ENCODE measurements at regions of chr11 and their contacts with region 1.

Region 1: DNA sequence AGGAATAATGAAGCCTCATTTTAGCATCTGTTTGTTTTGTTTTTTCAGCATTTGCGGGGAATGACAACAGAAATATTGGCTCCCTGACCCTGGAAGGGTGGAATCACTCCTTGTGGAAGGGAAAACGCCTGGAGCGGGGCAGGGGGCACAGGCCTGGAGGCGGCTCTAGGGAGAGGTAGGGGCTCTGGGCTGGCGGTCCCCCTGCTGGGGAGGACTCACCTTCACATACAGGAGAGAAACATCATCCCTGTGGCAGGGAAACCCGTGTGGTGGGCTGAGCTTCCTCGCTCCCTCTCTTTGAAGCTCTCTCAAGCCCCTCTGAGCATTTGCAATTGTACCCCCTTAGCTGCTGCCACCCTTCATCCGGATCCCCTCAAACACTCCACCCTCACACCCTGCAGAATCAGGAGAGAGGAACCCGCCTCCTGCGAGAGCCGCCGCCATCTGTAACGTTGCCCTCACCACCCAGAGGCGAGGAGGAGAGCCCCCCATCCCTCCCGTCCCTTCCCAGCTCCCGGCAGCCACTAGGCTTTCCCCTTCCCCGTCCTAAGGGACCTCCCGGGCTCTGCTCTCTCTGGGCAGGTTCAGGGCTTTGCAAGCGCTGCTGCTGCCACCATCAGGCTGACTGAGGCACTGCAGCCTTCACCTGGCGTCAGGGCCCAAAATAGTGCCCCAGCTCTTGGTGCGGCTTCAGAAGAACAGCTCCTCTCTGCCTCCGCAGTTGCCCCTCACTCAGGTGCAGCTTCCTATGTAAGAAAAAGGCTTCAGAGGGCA is 10.4 kb downstream of the KIRREL3 start:
- DNase-seq: peak; percentile 26
- H3K4me3 Mint-ChIP-seq: no peak overlapping the region
- H3K27ac Mint-ChIP-seq: no peak overlapping the region
- H3K4me1 Mint-ChIP-seq: no peaks in the 10 kb centered on the region
- H3K27me3 Mint-ChIP-seq: peaks cover 12% of the 10 kb centered on the region

Region 2: DNA sequence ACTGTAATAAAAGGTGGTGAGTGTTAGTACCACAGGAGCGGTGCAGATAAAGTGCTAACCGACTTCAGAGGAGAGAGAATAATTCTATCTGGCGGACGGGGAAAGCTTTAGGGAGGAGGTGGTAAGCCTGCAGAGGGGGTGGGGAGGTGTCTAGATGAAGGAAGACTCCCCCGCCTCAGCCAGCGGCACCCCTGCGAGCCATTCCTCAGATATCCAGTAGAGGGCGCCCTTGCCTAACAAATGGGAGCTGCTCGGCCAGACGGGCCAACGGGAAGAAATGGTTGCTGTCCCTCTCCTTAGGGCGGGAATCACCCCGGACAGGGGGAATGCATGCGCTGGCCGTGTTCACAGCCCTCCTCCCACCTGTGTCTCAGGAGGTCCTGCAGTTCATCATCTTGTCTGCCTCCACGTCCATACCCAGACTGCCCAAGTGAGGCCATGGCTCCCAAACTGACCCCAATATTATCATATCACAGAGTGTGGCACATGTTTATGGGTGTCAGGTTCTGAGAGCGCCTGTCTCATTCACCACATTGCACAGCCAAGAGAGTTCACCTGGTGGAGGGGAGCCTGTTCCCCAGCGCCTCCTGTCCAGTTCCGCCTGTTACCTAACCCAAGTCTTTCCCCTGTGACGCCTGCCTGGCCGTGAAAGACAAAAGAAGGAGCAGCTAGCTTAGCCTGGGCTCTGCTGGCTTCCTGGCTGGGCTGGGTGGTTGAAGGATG is 549.2 kb before region 1 on chr11:
- intact Hi-C with region 1: loop called (anchors 2 kb)
- DNase-seq: peak; percentile 66
- H3K4me3 Mint-ChIP-seq: no peak overlapping the region
- H3K27ac Mint-ChIP-seq: no peak overlapping the region
- H3K4me1 Mint-ChIP-seq: peaks cover 6% of the 10 kb centered on the region
- H3K27me3 Mint-ChIP-seq: peaks cover 4% of the 10 kb centered on the region

Region 3: DNA sequence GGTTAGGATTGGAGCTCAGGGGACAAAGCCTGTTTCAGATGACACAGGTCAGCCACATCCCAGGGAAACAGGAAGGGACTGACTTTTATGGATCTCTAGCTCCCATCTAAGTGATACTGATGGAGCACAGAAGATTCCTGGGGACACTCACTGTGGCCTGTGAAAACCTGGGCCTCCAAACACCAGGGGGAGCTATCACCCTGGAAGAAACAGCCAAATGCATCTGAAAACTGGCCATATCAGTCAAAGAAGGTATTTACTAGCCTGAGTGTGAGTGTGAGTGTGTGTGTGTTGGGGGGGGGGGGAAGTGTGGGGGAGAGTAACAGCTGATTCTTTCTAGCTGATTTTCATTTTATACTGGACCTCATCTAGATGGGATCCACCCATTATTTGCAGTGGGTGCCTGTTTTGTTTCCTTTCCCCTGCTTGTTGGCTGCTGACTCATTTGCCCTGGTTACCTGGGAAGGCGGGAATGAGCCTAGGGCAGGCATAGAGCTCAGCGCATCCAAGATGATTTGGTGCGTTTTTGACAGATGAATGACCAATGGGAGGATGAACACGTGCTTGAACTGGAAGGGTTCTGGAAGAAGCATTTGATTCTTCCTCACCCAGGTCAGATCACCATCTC is 273.6 kb before region 1 on chr11:
- intact Hi-C with region 1: loop called (anchors 1 kb)
- DNase-seq: no peak
- H3K4me3 Mint-ChIP-seq: no peak overlapping the region
- H3K27ac Mint-ChIP-seq: no peak overlapping the region
- H3K4me1 Mint-ChIP-seq: no peaks in the 10 kb centered on the region
- H3K27me3 Mint-ChIP-seq: peaks cover 16% of the 10 kb centered on the region

Region 4: GRCh38 chr11:126874831-126875230 is 115.3 kb before region 1 on chr11:
- intact Hi-C with region 1: loop called (anchors 10 kb)
- DNase-seq: no peak
- H3K4me3 Mint-ChIP-seq: no peak overlapping the region
- H3K27ac Mint-ChIP-seq: no peak overlapping the region
- H3K4me1 Mint-ChIP-seq: no peaks in the 10 kb centered on the region
- H3K27me3 Mint-ChIP-seq: peaks cover 14% of the 10 kb centered on the region

Region 5: GRCh38 chr11:127003260-127003981 is 13.3 kb after region 1 on chr11:
- intact Hi-C with region 1: no loop called
- DNase-seq: no peak
- H3K4me3 Mint-ChIP-seq: no peak overlapping the region
- H3K27ac Mint-ChIP-seq: no peak overlapping the region
- H3K4me1 Mint-ChIP-seq: no peaks in the 10 kb centered on the region
- H3K27me3 Mint-ChIP-seq: peaks cover 40% of the 10 kb centered on the region

Measured in activated T-helper 2 cell treated with anti-CD3 and anti-CD28 coated beads, Interferon-gamma antibody, Interleukin-2, Interleukin-4, amounts not matched to agents 10 μg/mL and 5 μg/mL and 100 μg/mL, durations not matched to agents 14 hours and 24 hours and 36 hours (primary cell).